ENCODE measurements at regions of chr7 and their contacts with region 1.

Region 1: GRCh38 chr7:85023045-85023712 is 163.7 kb downstream of the SEMA3D start:
- DNase-seq: no peak
- H3K4me3 ChIP-seq: no peak overlapping the region
- H3K27ac ChIP-seq: no peak overlapping the region
- H3K4me1 ChIP-seq: peaks cover 12% of the 10 kb centered on the region
- H3K27me3 ChIP-seq: no peaks in the 10 kb centered on the region
- CTCF ChIP-seq: peak in 2 of 3 experiments; percentile 36 to 49

Region 2: GRCh38 chr7:83936056-83936708 is 1087.0 kb before region 1 on chr7:
- dilution Hi-C with region 1: loop called (anchors 25 kb)
- DNase-seq: no peak
- H3K4me3 ChIP-seq: no peak overlapping the region
- H3K27ac ChIP-seq: no peak overlapping the region
- H3K4me1 ChIP-seq: no peaks in the 10 kb centered on the region
- H3K27me3 ChIP-seq: no peaks in the 10 kb centered on the region
- CTCF ChIP-seq: peak; percentile 64 to 76 (median 71)

Region 3: GRCh38 chr7:85160223-85160622 is 137.0 kb after region 1 on chr7:
- dilution Hi-C with region 1: no loop called
- DNase-seq: no peak
- H3K4me3 ChIP-seq: peak overlapping the region; percentile 24 to 76 (median 74)
- H3K27ac ChIP-seq: peak overlapping the region; percentile 92
- H3K4me1 ChIP-seq: peaks cover 15% of the 10 kb centered on the region
- H3K27me3 ChIP-seq: no peaks in the 10 kb centered on the region
- CTCF ChIP-seq: no peak

Region 4: DNA sequence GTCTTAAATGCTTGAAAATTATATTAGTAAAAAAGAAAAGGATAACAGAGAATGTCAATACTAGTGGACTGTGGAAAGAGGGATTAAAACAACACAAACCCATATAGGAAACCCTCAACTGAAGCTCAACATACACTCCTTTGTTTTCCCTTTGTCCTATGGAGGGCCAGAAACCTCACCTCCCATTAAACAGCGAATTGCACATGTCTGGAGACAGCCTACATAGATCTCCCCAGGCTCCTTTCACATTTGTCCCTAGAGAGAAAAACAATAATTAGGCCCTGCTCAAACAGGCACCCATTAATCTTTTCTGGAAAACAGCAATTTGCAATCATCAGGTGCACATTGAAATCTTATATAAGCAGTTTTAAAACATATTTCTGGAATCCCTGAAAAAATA is 251.3 kb after region 1 on chr7:
- dilution Hi-C with region 1: no loop called
- DNase-seq: no peak
- H3K4me3 ChIP-seq: no peak overlapping the region
- H3K27ac ChIP-seq: no peak overlapping the region
- H3K4me1 ChIP-seq: no peaks in the 10 kb centered on the region
- H3K27me3 ChIP-seq: no peaks in the 10 kb centered on the region
- CTCF ChIP-seq: no peak